ENCODE measurements at regions of chr12 and their contacts with region 1.

Region 1: GRCh38 chr12:49342066-49342913 is 4.4 kb upstream of the DNAJC22 start:
- DNase-seq: peak in 1 of 2 donors; percentile 85
- H3K4me3 ChIP-seq: peak overlapping the region; percentile 44 to 53
- H3K27ac ChIP-seq: peak overlapping the region; percentile 40
- H3K4me1 ChIP-seq: peaks cover 51% of the 10 kb centered on the region
- H3K27me3 ChIP-seq: peaks cover 18% of the 10 kb centered on the region
- CTCF ChIP-seq: peak; percentile 49 to 70 (median 57)
- POLR2A ChIP-seq: no peak

Region 2: DNA sequence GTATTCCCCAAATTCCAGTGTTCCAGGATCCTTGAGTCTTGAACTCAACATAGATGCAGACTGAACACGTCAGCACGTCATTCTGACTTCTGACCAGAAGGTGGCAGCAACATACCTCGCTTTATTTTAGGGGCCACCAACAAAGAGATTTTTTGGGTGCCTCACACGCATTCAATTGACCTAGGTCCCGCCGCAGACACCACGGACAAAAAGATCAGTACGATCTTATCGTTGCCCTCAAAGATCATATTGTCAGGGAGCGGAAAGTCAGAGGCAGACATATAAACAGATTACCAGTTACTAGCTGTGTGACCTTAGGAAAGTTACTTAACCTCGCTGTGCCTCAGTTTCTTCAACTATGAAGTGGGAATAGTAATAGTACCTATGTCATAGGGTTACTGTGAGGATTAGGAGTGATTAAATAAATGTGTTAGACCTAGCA is 53.9 kb before region 1 on chr12:
- intact Hi-C with region 1: loop called (anchors 5 kb)
- DNase-seq: no peak
- H3K4me3 ChIP-seq: no peak overlapping the region
- H3K27ac ChIP-seq: no peak overlapping the region
- H3K4me1 ChIP-seq: peaks cover 14% of the 10 kb centered on the region
- H3K27me3 ChIP-seq: no peaks in the 10 kb centered on the region
- CTCF ChIP-seq: peak; percentile 58 to 82 (median 79)
- POLR2A ChIP-seq: no peak

Region 3: DNA sequence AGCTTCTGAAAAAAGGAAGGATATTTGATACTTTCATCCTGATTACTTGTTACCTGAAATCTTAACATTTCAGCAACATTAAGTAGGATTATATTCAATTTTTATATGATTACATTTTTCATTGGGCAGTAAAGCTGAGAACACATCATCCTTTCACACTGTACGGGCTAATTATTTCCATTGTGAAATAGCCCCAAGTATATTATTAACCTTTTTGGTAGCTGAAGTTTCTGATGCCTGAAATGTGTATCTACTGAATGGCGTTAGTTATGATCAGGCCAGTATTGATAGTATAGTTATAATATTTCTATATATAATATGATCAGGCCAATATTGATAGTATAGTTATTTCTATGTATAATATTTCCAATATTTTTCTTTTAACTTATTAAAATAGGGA is 35.1 kb after region 1 on chr12:
- intact Hi-C with region 1: no loop called
- DNase-seq: no peak
- H3K4me3 ChIP-seq: no peak overlapping the region
- H3K27ac ChIP-seq: no peak overlapping the region
- H3K4me1 ChIP-seq: no peaks in the 10 kb centered on the region
- H3K27me3 ChIP-seq: no peaks in the 10 kb centered on the region
- CTCF ChIP-seq: no peak
- POLR2A ChIP-seq: no peak

Region 4: GRCh38 chr12:49428793-49429192 is 86.5 kb after region 1 on chr12:
- intact Hi-C with region 1: no loop called
- DNase-seq: no peak
- H3K4me3 ChIP-seq: no peak overlapping the region
- H3K27ac ChIP-seq: no peak overlapping the region
- H3K4me1 ChIP-seq: peaks cover 7% of the 10 kb centered on the region
- H3K27me3 ChIP-seq: no peaks in the 10 kb centered on the region
- CTCF ChIP-seq: no peak
- POLR2A ChIP-seq: no peak